Activated CD4-positive, alpha-beta memory T cell treated with anti-CD3 and anti-CD28 coated beads for 36 hours (primary cell): ENCODE measurements at regions of chr2 and their contacts with region 1.

Region 1: GRCh38 chr2:241149925-241150659 is at the start of gene PPP1R7:
- DNase-seq: peak; percentile 98
- H3K4me3 Mint-ChIP-seq: peak within 1 kb of the TSS; percentile 93
- H3K27ac Mint-ChIP-seq: peak within 1 kb of the TSS; percentile 86
- H3K4me1 Mint-ChIP-seq: peaks cover 56% of the 10 kb centered on the region
- H3K27me3 Mint-ChIP-seq: no peaks in the 10 kb centered on the region
- total RNA-seq, gene PPP1R7: 123 to 132 TPM

Region 2: DNA sequence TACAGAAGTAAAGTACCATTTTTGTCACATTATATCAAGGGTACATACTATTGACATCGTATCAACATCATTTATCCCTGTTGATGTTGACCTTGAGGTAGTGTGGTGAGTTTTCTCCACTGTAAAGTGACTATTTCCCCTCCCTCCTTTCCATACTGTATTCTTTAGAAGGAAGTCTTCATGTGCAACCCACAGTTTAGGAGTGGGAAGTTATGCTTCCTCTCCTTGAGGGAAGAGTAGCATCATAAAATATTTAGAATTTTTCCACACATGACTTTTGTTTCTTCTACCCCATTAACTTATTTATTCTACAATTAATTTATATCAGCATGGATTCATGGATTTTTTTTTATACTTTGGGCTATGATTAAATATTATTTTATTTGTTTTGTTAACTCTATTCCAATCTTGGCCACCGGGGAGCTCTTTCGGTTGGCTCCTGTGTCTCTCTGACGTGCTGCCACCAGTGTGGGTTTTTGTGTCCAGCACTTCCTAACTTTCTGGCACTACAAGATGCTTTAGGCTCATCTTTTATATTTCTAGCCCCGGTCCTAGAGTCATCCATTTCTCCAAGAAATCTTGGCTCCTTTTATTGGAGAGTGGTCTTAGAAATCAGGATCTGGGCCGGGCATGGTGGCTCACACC is 486.4 kb before region 1 on chr2:
- CTCF ChIA-PET with region 1: no interaction called
- POLR2A ChIA-PET with region 1: no interaction called
- intact Hi-C with region 1: no loop called
- DNase-seq: no peak
- H3K4me3 Mint-ChIP-seq: no peak overlapping the region
- H3K27ac Mint-ChIP-seq: no peak overlapping the region
- H3K4me1 Mint-ChIP-seq: no peaks in the 10 kb centered on the region
- H3K27me3 Mint-ChIP-seq: peaks cover 12% of the 10 kb centered on the region

Region 3: GRCh38 chr2:240832205-240832727 is 317.8 kb before region 1 on chr2:
- CTCF ChIA-PET with region 1: no interaction called
- POLR2A ChIA-PET with region 1: no interaction called
- intact Hi-C with region 1: loop called (anchors 1 kb)
- DNase-seq: peak; percentile 97
- H3K4me3 Mint-ChIP-seq: peak overlapping the region; percentile 68
- H3K27ac Mint-ChIP-seq: no peak overlapping the region
- H3K4me1 Mint-ChIP-seq: no peaks in the 10 kb centered on the region
- H3K27me3 Mint-ChIP-seq: peaks cover 15% of the 10 kb centered on the region

Region 4: GRCh38 chr2:240946654-240947053 is 203.4 kb before region 1 on chr2:
- CTCF ChIA-PET with region 1: no interaction called
- POLR2A ChIA-PET with region 1: no interaction called
- intact Hi-C with region 1: no loop called
- DNase-seq: no peak
- H3K4me3 Mint-ChIP-seq: no peak overlapping the region
- H3K27ac Mint-ChIP-seq: no peak overlapping the region
- H3K4me1 Mint-ChIP-seq: no peaks in the 10 kb centered on the region
- H3K27me3 Mint-ChIP-seq: no peaks in the 10 kb centered on the region

Region 5: GRCh38 chr2:241081643-241082340 is 68.3 kb before region 1 on chr2:
- CTCF ChIA-PET with region 1: interaction called, 30 read pairs
- POLR2A ChIA-PET with region 1: no interaction called
- intact Hi-C with region 1: loop called (anchors 1 kb)
- DNase-seq: no peak
- H3K4me3 Mint-ChIP-seq: no peak overlapping the region
- H3K27ac Mint-ChIP-seq: no peak overlapping the region
- H3K4me1 Mint-ChIP-seq: peaks cover 2% of the 10 kb centered on the region
- H3K27me3 Mint-ChIP-seq: no peaks in the 10 kb centered on the region

Region 6: DNA sequence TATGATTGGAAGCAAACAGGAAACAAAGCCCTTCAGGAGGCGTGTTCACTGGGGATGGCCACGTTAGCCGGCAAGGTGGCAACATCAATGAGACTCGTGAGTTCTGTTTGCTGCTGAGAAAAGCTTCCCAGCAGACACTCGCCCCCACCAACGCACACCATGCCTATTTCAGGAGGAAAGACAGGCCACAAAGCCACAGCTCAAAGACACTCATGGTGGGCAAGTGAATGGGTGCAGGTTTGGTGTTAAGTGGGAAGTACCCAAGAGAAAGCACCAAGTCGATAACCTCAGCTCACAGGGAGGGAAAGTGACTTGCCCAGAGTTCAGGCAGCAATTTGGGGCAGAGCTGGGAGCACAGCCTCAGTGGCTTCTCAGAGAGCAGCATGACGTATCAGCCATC is 37.5 kb before region 1 on chr2:
- CTCF ChIA-PET with region 1: no interaction called
- POLR2A ChIA-PET with region 1: interaction called, 7 read pairs
- intact Hi-C with region 1: loop called (anchors 2 kb)
- DNase-seq: peak; percentile 82
- H3K4me3 Mint-ChIP-seq: peak overlapping the region; percentile 85
- H3K27ac Mint-ChIP-seq: peak overlapping the region; percentile 96
- H3K4me1 Mint-ChIP-seq: peaks cover 36% of the 10 kb centered on the region
- H3K27me3 Mint-ChIP-seq: no peaks in the 10 kb centered on the region

Region 7: GRCh38 chr2:241163601-241164118 is 13.6 kb after region 1 on chr2:
- CTCF ChIA-PET with region 1: no interaction called
- POLR2A ChIA-PET with region 1: no interaction called
- intact Hi-C with region 1: no loop called
- DNase-seq: no peak
- H3K4me3 Mint-ChIP-seq: no peak overlapping the region
- H3K27ac Mint-ChIP-seq: no peak overlapping the region
- H3K4me1 Mint-ChIP-seq: no peaks in the 10 kb centered on the region
- H3K27me3 Mint-ChIP-seq: no peaks in the 10 kb centered on the region

Region 8: GRCh38 chr2:241179899-241180298 is 29.8 kb after region 1 on chr2:
- CTCF ChIA-PET with region 1: interaction called, 6 read pairs
- POLR2A ChIA-PET with region 1: interaction called, 6 read pairs
- intact Hi-C with region 1: loop called (anchors 1 kb)
- DNase-seq: peak; percentile 78
- H3K4me3 Mint-ChIP-seq: no peak overlapping the region
- H3K27ac Mint-ChIP-seq: peak overlapping the region; percentile 69
- H3K4me1 Mint-ChIP-seq: peaks cover 19% of the 10 kb centered on the region
- H3K27me3 Mint-ChIP-seq: no peaks in the 10 kb centered on the region